Activated CD8-positive, alpha-beta memory T cell treated with anti-CD3 and anti-CD28 coated beads, Interleukin-2, amount 10 ng/mL, durations not matched to agents 7 days and 5 days (primary cell): ENCODE measurements at regions of chr19 and their contacts with region 1.

Region 1: DNA sequence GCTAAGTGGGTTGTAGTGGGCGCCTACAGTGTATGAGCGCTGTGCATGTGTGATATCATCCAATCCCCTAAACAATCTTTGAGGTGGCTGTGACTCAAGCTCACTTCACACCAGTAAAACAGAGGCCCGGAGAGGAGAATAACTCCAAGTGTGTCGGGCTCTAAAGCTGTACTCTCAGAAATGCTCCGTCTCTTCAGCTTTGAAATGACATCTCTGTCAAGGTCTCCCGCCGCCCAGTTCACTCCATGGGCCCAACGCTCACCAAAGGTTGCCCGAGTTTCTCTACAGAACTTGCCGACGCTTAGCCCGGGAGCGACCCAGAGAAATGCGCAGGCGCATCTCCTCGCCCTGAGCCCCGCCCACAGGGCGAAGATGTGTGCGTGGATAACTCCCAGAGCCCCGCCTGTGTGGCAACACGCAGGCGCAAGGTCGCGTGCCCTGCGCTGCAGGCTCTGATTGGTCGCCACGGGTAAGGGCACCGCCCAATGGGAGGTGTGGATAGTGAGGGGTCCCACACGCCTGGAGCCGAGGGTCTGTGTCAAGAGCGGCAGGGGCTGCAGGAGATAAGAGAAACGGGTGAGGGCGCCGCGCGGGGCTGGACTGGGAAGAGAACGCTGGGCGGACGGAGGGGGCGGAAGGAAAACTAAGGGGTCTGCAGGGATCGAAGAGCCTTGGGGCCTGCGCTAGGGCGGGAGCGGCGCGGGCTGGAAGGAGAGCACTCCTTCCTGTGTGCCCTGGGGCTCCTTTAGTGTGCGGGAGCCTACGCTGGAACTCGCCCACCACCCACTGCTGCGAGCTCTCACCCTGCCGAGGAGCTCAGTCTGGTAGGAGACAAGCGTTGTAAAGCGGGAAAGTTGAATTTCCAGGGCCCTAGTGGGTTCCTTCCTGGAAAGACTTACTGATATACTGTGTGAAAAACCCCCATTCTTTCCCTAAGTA is at the start of gene ZNF526:
- DNase-seq: peak; percentile 99
- ATAC-seq: peak; percentile 87
- H3K4me3 Mint-ChIP-seq: peak within 1 kb of the TSS; percentile 98
- H3K27ac Mint-ChIP-seq: peak within 1 kb of the TSS; percentile 94
- H3K4me1 Mint-ChIP-seq: peaks cover 65% of the 10 kb centered on the region
- H3K27me3 Mint-ChIP-seq: no peaks in the 10 kb centered on the region
- total RNA-seq, gene ZNF526: 21.9 to 24.4 TPM

Region 2: DNA sequence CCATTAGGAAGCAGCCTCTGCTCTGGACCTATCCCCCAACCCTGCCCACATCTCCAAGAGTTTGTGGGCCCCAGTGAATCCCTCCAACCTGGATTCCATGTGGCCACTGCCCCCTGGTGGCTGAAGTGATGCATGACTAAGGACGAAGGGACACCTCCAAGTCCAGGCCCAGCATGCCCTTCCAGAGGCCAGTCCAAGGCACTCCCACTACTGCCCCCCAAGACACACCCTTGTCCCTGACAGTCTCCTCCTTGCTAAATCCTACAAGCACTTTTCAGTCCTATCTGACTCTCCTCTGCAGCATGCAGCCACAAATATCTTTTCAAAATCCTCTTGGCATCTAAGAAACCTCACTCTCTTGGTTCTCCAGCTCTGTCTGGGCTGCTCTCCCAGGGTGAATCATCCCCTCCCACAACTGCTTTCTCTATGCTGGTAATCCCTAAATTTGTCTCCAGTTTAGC is 35.6 kb before region 1 on chr19:
- CTCF ChIA-PET with region 1: interaction called, 14 read pairs
- DNase-seq: peak; percentile 81
- ATAC-seq: peak; percentile 78
- H3K4me3 Mint-ChIP-seq: peak overlapping the region; percentile 5
- H3K27ac Mint-ChIP-seq: peak overlapping the region; percentile 87
- H3K4me1 Mint-ChIP-seq: peaks cover 39% of the 10 kb centered on the region
- H3K27me3 Mint-ChIP-seq: peaks cover 8% of the 10 kb centered on the region